MCF 10A (cell line): ENCODE measurements at regions of chr17 and their contacts with region 1.

Region 1: DNA sequence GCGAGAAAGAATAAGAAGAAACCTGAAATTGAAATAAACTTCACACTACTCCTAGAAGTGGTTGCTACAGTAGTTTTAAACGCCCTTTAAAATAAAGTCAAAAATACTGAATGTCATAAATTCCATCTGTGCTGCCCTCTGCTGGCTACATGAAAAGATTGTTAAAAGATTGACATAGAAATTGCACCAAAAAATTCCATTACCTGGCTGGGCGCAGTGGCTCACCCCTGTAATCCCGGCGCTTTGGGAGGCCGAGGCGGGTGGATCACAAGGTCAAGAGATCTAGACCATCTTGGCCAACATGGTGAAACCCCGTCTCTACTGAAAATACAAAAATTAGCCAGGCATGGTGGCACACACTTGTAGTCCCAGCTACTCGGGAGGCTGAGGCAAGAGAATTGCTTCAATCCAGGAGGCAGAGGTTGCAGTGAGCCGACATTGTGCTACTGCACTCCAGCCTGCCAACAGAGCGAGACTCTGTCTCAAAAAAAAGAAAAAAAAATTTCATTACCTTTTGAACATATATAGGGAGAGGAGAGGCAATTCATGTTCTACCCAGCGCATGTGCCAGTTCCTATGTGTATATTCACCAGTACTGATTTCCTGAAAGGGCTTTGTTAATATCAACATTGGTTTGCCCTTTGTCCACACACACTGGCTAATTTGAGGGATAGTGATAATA is 36.5 kb downstream of the CYTH1 start:
- DNase-seq: peak; percentile 59
- H3K4me3 Mint-ChIP-seq: no peak overlapping the region
- H3K27ac Mint-ChIP-seq: no peak overlapping the region
- H3K4me1 Mint-ChIP-seq: peaks cover 34% of the 10 kb centered on the region
- H3K27me3 Mint-ChIP-seq: no peaks in the 10 kb centered on the region
- CTCF ChIP-seq: peak; percentile 58

Region 2: DNA sequence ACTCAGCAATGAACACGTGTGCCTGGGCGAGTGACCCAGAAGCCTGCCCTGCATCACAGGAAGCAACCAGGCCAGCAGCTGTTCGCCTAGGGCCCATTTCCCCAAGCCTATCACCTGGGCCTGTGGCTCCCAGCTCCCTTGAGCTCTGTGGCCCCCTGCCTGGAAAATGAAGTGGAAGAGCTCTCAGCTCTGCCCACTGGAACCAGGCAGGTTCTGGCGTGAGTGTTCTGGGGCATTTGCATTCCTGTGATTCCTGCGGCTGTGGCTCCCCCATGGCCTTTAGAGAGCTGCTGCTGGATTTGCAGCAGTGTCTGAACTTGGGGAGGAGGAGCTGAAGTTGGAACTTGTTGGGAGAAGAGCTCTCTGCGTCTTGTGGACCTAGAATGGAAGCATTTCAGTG is 344.3 kb before region 1 on chr17:
- CTCF ChIA-PET with region 1: no interaction called
- POLR2A ChIA-PET with region 1: no interaction called
- intact Hi-C with region 1: no loop called
- DNase-seq: no peak
- H3K4me3 Mint-ChIP-seq: no peak overlapping the region
- H3K27ac Mint-ChIP-seq: no peak overlapping the region
- H3K4me1 Mint-ChIP-seq: no peaks in the 10 kb centered on the region
- H3K27me3 Mint-ChIP-seq: no peaks in the 10 kb centered on the region
- CTCF ChIP-seq: no peak

Region 3: DNA sequence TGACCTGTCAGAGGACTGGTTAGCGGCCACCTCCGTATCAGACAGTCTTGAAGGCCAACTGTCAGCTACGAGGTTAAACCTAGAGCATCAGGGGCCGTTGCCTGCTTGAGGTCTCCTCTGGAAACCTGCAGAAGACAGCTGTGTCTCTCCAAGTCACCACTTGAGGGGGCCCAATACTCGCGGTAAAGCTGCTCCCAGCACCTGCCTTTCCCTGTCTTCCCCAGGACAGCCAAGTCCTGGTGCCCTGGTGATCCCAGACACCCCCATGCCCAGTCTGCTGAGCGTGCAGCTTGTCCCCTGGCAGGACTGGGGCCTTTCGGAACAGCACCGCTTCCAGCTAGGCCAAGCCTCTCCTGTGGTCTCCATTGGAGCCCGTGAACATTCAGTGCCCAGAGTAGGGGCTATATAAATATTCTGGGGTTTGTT is 248.4 kb before region 1 on chr17:
- CTCF ChIA-PET with region 1: interaction called, 12 read pairs
- POLR2A ChIA-PET with region 1: interaction called, 4 read pairs
- intact Hi-C with region 1: loop called (anchors 1 kb)
- DNase-seq: peak; percentile 84
- H3K4me3 Mint-ChIP-seq: no peak overlapping the region
- H3K27ac Mint-ChIP-seq: no peak overlapping the region
- H3K4me1 Mint-ChIP-seq: no peaks in the 10 kb centered on the region
- H3K27me3 Mint-ChIP-seq: no peaks in the 10 kb centered on the region
- CTCF ChIP-seq: peak; percentile 73

Region 4: GRCh38 chr17:78716814-78717393 is 28.6 kb before region 1 on chr17:
- CTCF ChIA-PET with region 1: interaction called, 5 read pairs
- POLR2A ChIA-PET with region 1: interaction called, 21 read pairs
- intact Hi-C with region 1: loop called (anchors 1 kb)
- DNase-seq: peak; percentile 76
- H3K4me3 Mint-ChIP-seq: peak overlapping the region; percentile 74
- H3K27ac Mint-ChIP-seq: peak overlapping the region; percentile 70
- H3K4me1 Mint-ChIP-seq: peaks cover 55% of the 10 kb centered on the region
- H3K27me3 Mint-ChIP-seq: no peaks in the 10 kb centered on the region
- CTCF ChIP-seq: no peak

Region 5: GRCh38 chr17:78774956-78775571 is 29.5 kb after region 1 on chr17:
- CTCF ChIA-PET with region 1: interaction called, 5 read pairs
- POLR2A ChIA-PET with region 1: interaction called, 8 read pairs
- intact Hi-C with region 1: loop called (anchors 2 kb)
- DNase-seq: peak; percentile 41
- H3K4me3 Mint-ChIP-seq: peak overlapping the region; percentile 68
- H3K27ac Mint-ChIP-seq: peak overlapping the region; percentile 81
- H3K4me1 Mint-ChIP-seq: peaks cover 21% of the 10 kb centered on the region
- H3K27me3 Mint-ChIP-seq: no peaks in the 10 kb centered on the region
- CTCF ChIP-seq: no peak

Region 6: DNA sequence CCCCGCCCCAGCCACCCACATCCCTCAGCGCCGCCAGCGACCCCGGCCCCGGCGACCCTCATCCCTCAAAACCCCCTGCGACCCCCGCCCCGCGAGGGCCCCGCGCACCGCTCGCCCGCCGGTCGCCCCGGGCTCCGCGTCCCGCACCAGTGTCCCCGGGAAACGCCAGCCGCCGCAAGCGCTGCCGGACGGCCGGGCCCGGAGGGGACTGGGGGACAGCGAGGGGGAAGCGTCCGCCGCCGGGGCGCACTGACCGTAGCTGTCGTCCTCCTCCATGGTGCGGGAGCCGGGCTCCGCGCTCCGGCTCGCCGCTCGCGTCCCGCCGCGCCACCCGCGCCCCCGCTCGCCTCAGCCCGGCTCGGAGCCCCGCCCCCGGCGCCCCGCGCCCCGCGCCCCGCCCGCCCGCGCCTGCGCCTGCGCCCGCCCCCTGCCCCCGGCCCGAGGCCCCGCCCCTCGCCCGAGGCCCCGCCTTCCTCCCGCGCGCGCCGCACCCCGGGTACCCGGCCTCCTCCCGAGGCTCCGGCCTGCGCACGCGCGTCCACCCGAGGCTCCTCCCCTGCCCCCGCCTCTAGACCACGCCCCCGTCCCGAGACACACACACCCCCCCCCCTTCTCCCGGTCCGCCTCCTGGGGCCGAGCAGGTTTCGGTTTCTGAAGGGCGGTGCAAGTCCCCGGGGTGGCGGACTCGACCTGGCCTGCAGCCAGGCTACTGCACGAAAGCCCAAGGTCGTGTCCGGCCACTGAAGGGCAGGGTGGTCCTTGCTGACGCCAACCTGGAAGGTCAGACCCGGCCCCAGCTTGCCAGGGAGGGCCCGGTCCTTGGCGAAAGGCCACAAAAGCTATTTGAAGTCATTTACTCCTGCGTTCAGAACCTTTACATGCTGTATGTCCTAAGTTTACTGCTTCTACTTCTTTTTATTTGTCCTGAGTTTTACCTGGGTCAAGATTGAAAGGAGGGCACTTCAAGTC is 36.7 kb after region 1 on chr17 and contains the start of gene CYTH1:
- CTCF ChIA-PET with region 1: interaction called, 6 read pairs
- POLR2A ChIA-PET with region 1: interaction called, 11 read pairs
- intact Hi-C with region 1: no loop called
- DNase-seq: peak; percentile 92
- H3K4me3 Mint-ChIP-seq: peak within 1 kb of the TSS; percentile 79
- H3K27ac Mint-ChIP-seq: peak within 1 kb of the TSS; percentile 87
- H3K4me1 Mint-ChIP-seq: peaks cover 13% of the 10 kb centered on the region
- H3K27me3 Mint-ChIP-seq: no peaks in the 10 kb centered on the region
- CTCF ChIP-seq: no peak
- total RNA-seq, gene CYTH1: 32.8 and 38.5 TPM in 2 replicates

Region 7: DNA sequence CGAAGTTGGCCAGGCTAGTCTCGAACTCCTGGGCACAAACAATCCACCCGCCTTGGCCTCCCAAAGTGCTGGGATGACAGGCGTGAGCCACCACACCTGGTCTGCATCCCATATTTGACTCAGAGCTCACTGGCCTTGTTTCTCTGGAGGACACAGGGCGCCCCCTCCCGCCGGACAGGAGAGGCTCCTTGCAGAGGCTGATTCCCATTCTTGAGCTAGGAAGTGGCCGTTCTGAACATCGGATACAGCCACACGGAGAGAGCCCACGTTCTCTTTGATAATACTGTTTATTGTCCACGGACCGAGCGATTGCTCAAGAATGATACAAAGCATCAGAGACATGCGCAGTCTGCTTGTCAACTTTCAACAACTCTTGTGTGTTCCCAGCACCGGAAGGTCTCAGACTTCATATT is 107.2 kb after region 1 on chr17:
- CTCF ChIA-PET with region 1: no interaction called
- POLR2A ChIA-PET with region 1: no interaction called
- intact Hi-C with region 1: no loop called
- DNase-seq: no peak
- H3K4me3 Mint-ChIP-seq: no peak overlapping the region
- H3K27ac Mint-ChIP-seq: no peak overlapping the region
- H3K4me1 Mint-ChIP-seq: peaks cover 5% of the 10 kb centered on the region
- H3K27me3 Mint-ChIP-seq: no peaks in the 10 kb centered on the region
- CTCF ChIP-seq: no peak

Region 8: GRCh38 chr17:78883164-78884122 is 137.9 kb after region 1 on chr17:
- CTCF ChIA-PET with region 1: no interaction called
- POLR2A ChIA-PET with region 1: no interaction called
- intact Hi-C with region 1: no loop called
- DNase-seq: peak; percentile 78
- H3K4me3 Mint-ChIP-seq: peak overlapping the region; percentile 58
- H3K27ac Mint-ChIP-seq: peak overlapping the region; percentile 91
- H3K4me1 Mint-ChIP-seq: peaks cover 21% of the 10 kb centered on the region
- H3K27me3 Mint-ChIP-seq: no peaks in the 10 kb centered on the region
- CTCF ChIP-seq: no peak